ENCODE measurements at regions of chr14 and their contacts with region 1.

Region 1: GRCh38 chr14:75258615-75259466 is 19.8 kb upstream of the FOS start:
- DNase-seq: peak; percentile 96
- ATAC-seq: peak; percentile 96
- H3K4me3 ChIP-seq: peak overlapping the region; percentile 64; the same call in 1 of the 2 replicates
- H3K27ac ChIP-seq: peak overlapping the region; percentile 60
- H3K4me1 ChIP-seq: peaks cover 15% of the 10 kb centered on the region
- H3K27me3 ChIP-seq: peaks cover 0 to 4% of the 10 kb centered on the region in 2 experiments; a peak in 1 of 4 replicates
- CTCF ChIP-seq: no peak
- EP300 ChIP-seq: peak; percentile 80 to 98
- POLR2A ChIP-seq: no peak
- RAD21 ChIP-seq: no peak

Region 2: DNA sequence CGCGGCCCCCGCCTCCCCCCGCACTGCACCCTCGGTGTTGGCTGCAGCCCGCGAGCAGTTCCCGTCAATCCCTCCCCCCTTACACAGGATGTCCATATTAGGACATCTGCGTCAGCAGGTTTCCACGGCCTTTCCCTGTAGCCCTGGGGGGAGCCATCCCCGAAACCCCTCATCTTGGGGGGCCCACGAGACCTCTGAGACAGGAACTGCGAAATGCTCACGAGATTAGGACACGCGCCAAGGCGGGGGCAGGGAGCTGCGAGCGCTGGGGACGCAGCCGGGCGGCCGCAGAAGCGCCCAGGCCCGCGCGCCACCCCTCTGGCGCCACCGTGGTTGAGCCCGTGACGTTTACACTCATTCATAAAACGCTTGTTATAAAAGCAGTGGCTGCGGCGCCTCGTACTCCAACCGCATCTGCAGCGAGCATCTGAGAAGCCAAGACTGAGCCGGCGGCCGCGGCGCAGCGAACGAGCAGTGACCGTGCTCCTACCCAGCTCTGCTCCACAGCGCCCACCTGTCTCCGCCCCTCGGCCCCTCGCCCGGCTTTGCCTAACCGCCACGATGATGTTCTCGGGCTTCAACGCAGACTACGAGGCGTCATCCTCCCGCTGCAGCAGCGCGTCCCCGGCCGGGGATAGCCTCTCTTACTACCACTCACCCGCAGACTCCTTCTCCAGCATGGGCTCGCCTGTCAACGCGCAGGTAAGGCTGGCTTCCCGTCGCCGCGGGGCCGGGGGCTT is 19.8 kb after region 1 on chr14 and contains the start of gene FOS:
- CTCF ChIA-PET with region 1: no interaction called
- POLR2A ChIA-PET with region 1: interaction called, 4 read pairs
- RAD21 ChIA-PET with region 1: interaction called, 6 read pairs
- SMC1A ChIA-PET with region 1: interaction called, 5 read pairs
- in situ Hi-C with region 1: no loop called
- intact Hi-C with region 1: loop called (anchors 2 kb)
- DNase-seq: no peak
- ATAC-seq: peak; percentile 90
- H3K4me3 ChIP-seq: peak within 1 kb of the TSS; percentile 73
- H3K27ac ChIP-seq: peak within 1 kb of the TSS; percentile 59; the same call in 1 of the 2 replicates
- H3K4me1 ChIP-seq: peaks cover 17% of the 10 kb centered on the region
- H3K27me3 ChIP-seq: peaks cover 27 to 33% of the 10 kb centered on the region in 2 experiments
- CTCF ChIP-seq: no peak
- EP300 ChIP-seq: peak; percentile 20 to 43; a peak in 1 of 4 replicates
- POLR2A ChIP-seq: peak; percentile 96
- RAD21 ChIP-seq: no peak
- polyA plus RNA-seq, gene FOS: 0.02 to 0.13 TPM

Measured in GM12878 (cell line).